ENCODE measurements at regions of chr2 and their contacts with region 1.

Region 1: GRCh38 chr2:199940373-199940772 is 14.9 kb downstream of the TYW5 start:
- DNase-seq: no peak
- H3K4me3 Mint-ChIP-seq: no peak overlapping the region
- H3K27ac Mint-ChIP-seq: no peak overlapping the region
- H3K4me1 Mint-ChIP-seq: peaks cover 7% of the 10 kb centered on the region
- H3K27me3 Mint-ChIP-seq: no peaks in the 10 kb centered on the region

Region 2: GRCh38 chr2:199850718-199851500 is 89.5 kb before region 1 on chr2 and contains the start of gene FTCDNL1:
- CTCF ChIA-PET with region 1: interaction called, 3 read pairs
- POLR2A ChIA-PET with region 1: no interaction called
- intact Hi-C with region 1: loop called (anchors 5 kb)
- DNase-seq: peak; percentile 78
- H3K4me3 Mint-ChIP-seq: peak within 1 kb of the TSS; percentile 92
- H3K27ac Mint-ChIP-seq: peak within 1 kb of the TSS; percentile 79
- H3K4me1 Mint-ChIP-seq: peaks cover 4% of the 10 kb centered on the region
- H3K27me3 Mint-ChIP-seq: no peaks in the 10 kb centered on the region
- total RNA-seq, gene FTCDNL1: 2.9 to 3.3 TPM

Measured in activated CD4-positive, alpha-beta memory T cell treated with anti-CD3 and anti-CD28 coated beads for 36 hours (primary cell).